Esophagus squamous epithelium (tissue), 5 donors: ENCODE measurements at regions of chr9 and their contacts with region 1.

Region 1: DNA sequence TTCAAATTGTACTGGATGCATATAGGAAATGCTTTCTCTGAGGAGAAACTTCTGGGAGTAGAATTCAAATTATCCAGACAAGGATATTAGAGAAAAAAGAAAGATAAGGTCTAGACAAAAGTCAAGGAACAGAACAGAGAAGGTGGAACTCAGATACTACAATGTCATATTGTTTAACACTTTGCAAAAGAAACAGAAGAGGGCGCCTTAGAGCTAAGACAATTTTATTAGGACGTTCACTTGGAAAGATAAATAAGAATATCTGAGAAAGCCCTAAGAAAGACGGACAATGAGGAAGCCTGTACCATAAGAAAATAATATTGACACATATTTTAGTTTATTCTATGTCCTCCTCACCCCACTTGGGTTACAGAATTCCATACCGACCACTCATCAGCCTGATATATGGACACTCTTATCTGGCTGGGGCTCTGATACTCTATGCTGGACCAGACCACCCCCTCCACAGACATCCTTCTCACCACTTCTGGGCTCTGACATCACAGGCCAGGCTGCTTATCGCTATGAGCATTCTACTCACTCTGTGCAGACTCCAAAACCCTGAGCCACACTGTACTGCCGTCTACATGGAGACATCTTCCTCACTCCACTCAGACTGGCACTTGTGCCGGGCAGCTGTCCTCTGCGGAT is 9.1 kb upstream of the AK3 start:
- DNase-seq: no peak
- H3K4me3 ChIP-seq: no peak overlapping the region
- H3K27ac ChIP-seq: no peak overlapping the region
- H3K4me1 ChIP-seq: no peaks in the 10 kb centered on the region
- H3K27me3 ChIP-seq: peaks cover 0 to 4% (median 0%) of the 10 kb centered on the region in 4 donors
- CTCF ChIP-seq: peak in 4 of 6 experiments; percentile 45 to 60 (median 52)
- POLR2A ChIP-seq: no peak

Region 2: DNA sequence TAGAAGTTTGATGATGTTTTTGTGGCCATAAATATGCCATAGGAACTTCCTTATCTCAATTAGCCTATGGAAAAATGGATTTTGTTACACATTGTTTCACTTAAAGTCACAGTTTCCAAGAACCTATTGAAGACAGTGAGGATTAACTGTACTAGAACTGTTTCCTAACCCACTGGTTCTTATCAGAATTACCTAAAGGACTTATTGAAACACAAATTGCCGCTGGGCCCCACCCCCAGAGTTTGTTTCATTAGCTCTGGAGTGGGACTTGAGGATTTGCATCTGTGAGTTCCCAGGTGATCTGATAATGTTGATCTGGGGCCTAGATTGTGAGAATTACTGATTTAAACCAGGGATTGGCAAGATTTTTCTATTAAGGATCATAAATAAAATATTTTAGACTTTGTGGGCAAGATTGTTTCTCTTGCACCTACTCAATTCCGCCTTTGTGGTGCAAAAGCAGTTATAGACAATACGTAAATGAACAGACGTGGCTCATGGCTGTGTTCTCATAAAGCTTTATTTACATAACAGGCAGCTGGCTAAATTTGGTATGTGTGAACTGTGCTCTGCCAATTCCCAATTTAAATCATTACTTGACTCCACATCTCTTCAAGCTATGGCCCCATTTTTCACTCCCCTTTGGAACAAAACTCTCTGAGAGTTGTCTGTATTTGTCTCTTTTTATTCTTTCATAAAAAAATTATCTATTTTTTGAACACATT is 244.2 kb after region 1 on chr9:
- intact Hi-C with region 1: loop called (anchors 10 kb)
- DNase-seq: no peak
- H3K4me3 ChIP-seq: no peak overlapping the region
- H3K27ac ChIP-seq: no peak overlapping the region
- H3K4me1 ChIP-seq: peaks cover 0 to 35% (median 0%) of the 10 kb centered on the region in 3 donors
- H3K27me3 ChIP-seq: no peaks in the 10 kb centered on the region
- CTCF ChIP-seq: no peak
- POLR2A ChIP-seq: no peak